Vagina (tissue), 2 donors: ENCODE measurements at regions of chr10 and their contacts with region 1.

Region 1: GRCh38 chr10:116683821-116684220 is 58.5 kb downstream of the HSPA12A start:
- DNase-seq: no peak
- H3K4me3 ChIP-seq: no peak overlapping the region
- H3K27ac ChIP-seq: no peak overlapping the region
- H3K4me1 ChIP-seq: peaks cover 17% of the 10 kb centered on the region
- H3K27me3 ChIP-seq: no peaks in the 10 kb centered on the region
- CTCF ChIP-seq: no peak
- POLR2A ChIP-seq: no peak

Region 2: DNA sequence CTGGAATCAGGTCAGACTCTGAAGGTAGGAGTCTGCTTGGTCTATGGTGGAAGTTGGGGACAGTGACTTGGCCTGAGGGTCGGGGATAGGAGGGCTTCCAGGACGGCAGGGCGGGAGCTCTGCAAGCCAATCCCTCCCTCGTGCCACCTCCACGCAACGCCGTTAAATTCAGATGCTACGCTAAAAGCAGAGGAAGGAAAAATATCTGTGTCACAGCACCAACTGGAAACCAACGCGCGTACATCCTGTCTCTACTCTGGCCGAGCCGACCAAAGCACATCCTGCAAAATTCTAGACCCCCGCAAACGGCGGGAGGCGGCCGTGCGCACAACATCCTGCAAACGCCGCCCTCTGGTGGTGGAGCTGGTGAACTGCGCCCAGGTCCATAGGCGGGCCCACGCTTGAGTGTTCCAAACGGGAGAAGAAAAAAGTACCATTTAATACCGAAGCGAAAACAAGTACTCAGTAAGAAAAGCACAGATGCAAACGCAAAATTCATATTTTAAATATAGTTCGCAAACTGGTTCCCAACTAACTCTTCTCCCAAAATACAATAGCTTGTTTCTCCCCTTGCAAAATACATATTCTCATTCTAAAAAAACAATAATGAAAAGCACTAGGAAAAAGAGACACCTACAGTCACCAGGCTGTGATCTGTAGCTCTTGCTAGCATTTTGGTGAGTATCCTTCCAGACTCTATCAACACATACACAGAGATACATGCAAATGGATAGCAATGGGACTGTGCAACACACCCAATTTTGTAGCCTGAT is 104.3 kb after region 1 on chr10:
- intact Hi-C with region 1: loop called (anchors 5 kb)
- DNase-seq: no peak
- H3K4me3 ChIP-seq: peak overlapping the region; percentile 8 to 27
- H3K27ac ChIP-seq: no peak overlapping the region
- H3K4me1 ChIP-seq: peaks cover 6% of the 10 kb centered on the region
- H3K27me3 ChIP-seq: no peaks in the 10 kb centered on the region
- CTCF ChIP-seq: peak; percentile 94 to 97 (median 96)
- POLR2A ChIP-seq: no peak